Endothelial cell of umbilical vein (primary cell): ENCODE measurements at regions of chr19 and their contacts with region 1.

Region 1: DNA sequence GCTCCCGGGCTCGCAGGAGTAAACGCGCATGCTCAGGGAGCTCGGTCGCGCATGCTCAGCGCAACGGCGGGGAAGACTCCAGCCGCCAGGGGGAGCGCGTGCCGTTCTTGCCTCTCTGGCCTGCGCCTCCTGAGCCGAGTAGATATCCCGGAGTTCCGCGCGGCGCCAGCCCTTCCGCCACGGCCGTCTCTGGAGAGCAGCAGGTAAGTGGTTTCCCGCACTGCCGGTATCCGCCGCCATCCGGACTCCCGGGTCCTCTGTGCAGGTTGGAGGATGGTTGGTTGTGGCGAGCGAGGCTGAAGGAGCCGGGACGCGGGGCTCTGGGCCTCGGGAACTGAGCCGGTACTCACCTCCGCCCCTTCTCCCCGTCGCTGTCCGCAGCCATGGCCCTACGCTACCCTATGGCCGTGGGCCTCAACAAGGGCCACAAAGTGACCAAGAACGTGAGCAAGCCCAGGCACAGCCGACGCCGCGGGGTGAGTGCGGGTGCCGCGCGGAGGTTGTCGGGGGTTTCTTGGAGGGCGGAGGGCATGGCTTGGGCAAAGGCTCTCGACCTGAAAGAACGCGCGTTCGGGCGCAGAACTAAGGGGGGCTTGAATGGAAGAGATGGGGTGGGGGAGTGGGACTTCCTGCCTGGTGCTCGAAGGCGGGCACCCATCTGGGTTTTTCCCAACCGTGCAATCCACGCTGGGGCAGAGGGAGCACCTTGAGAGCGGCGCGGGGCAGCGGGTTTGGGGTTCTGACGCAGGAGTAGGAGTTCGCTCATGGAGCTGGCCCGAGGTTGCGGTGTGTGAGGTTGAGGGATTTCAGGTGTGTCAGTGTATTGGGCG is at the start of gene RPL36:
- DNase-seq: peak; percentile 99
- H3K4me3 ChIP-seq: peak within 1 kb of the TSS; percentile 74 to 87 (median 78)
- H3K27ac ChIP-seq: peak within 1 kb of the TSS; percentile 79
- H3K4me1 ChIP-seq: peaks cover 8% of the 10 kb centered on the region
- H3K27me3 ChIP-seq: no peaks in the 10 kb centered on the region
- CTCF ChIP-seq: peak; percentile 99 to 100
- POLR2A ChIP-seq: peak; percentile 98
- total RNA-seq, gene RPL36: 944 and 1,033 TPM in 2 replicates

Region 2: GRCh38 chr19:5561559-5561958 is 128.8 kb before region 1 on chr19:
- CTCF ChIA-PET with region 1: no interaction called
- POLR2A ChIA-PET with region 1: no interaction called
- dilution Hi-C with region 1: no loop called
- intact Hi-C with region 1: no loop called
- DNase-seq: no peak
- H3K4me3 ChIP-seq: no peak overlapping the region
- H3K27ac ChIP-seq: no peak overlapping the region
- H3K4me1 ChIP-seq: no peaks in the 10 kb centered on the region
- H3K27me3 ChIP-seq: peaks cover 4% of the 10 kb centered on the region in 2 experiments
- CTCF ChIP-seq: peak; percentile 18 to 38
- POLR2A ChIP-seq: no peak

Region 3: GRCh38 chr19:5622463-5623396 is 67.6 kb before region 1 on chr19 and contains the starts of genes SAFB and SAFB2:
- CTCF ChIA-PET with region 1: interaction called, 10 read pairs
- POLR2A ChIA-PET with region 1: interaction called, 7 read pairs
- dilution Hi-C with region 1: no loop called
- intact Hi-C with region 1: no loop called
- DNase-seq: peak; percentile 100
- H3K4me3 ChIP-seq: peak within 1 kb of the TSS; percentile 82 to 96 (median 93)
- H3K27ac ChIP-seq: peak within 1 kb of the TSS; percentile 63
- H3K4me1 ChIP-seq: peaks cover 28% of the 10 kb centered on the region
- H3K27me3 ChIP-seq: no peaks in the 10 kb centered on the region
- CTCF ChIP-seq: no peak
- POLR2A ChIP-seq: peak; percentile 94
- total RNA-seq, gene SAFB: 96.8 and 109 TPM in 2 replicates
- total RNA-seq, gene SAFB2: 83.7 and 85.9 TPM in 2 replicates

Region 4: GRCh38 chr19:5719961-5720790 is 29.8 kb after region 1 on chr19 and contains the starts of genes CATSPERD and LONP1:
- CTCF ChIA-PET with region 1: interaction called, 11 read pairs
- POLR2A ChIA-PET with region 1: interaction called, 4 read pairs
- dilution Hi-C with region 1: no loop called
- intact Hi-C with region 1: loop called (anchors 1 kb)
- DNase-seq: peak; percentile 99
- H3K4me3 ChIP-seq: peak within 1 kb of the TSS; percentile 52 to 79 (median 75)
- H3K27ac ChIP-seq: peak within 1 kb of the TSS; percentile 85
- H3K4me1 ChIP-seq: peaks cover 15% of the 10 kb centered on the region
- H3K27me3 ChIP-seq: no peaks in the 10 kb centered on the region
- CTCF ChIP-seq: peak; percentile 92 to 98
- POLR2A ChIP-seq: peak; percentile 75
- total RNA-seq, gene CATSPERD: not detected in 2 replicates
- total RNA-seq, gene LONP1: 95.1 and 95.7 TPM in 2 replicates

Region 5: GRCh38 chr19:5790573-5791520 is 100.5 kb after region 1 on chr19 and contains the start of gene DUS3L:
- CTCF ChIA-PET with region 1: interaction called, 7 read pairs
- POLR2A ChIA-PET with region 1: no interaction called
- dilution Hi-C with region 1: no loop called
- intact Hi-C with region 1: loop called (anchors 1 kb)
- DNase-seq: peak; percentile 99
- H3K4me3 ChIP-seq: peak within 1 kb of the TSS; percentile 17 to 75 (median 55)
- H3K27ac ChIP-seq: peak within 1 kb of the TSS; percentile 82
- H3K4me1 ChIP-seq: peaks cover 5% of the 10 kb centered on the region
- H3K27me3 ChIP-seq: no peaks in the 10 kb centered on the region
- CTCF ChIP-seq: no peak
- POLR2A ChIP-seq: peak; percentile 68
- total RNA-seq, gene DUS3L: 38.9 and 40.8 TPM in 2 replicates